Kidney (tissue), 22 donors: ENCODE measurements at regions of chr16 and their contacts with region 1.

Region 1: GRCh38 chr16:87778830-87779579 is 13.2 kb upstream of the KLHDC4 start:
- DNase-seq: peak; percentile 86 to 96 (median 92)
- H3K4me3 ChIP-seq: no peak overlapping the region
- H3K27ac ChIP-seq: no peak overlapping the region
- H3K4me1 ChIP-seq: peaks cover 0 to 3% (median 0%) of the 10 kb centered on the region in 3 donors
- H3K27me3 ChIP-seq: no peaks in the 10 kb centered on the region
- CTCF ChIP-seq: peak; percentile 96

Region 2: DNA sequence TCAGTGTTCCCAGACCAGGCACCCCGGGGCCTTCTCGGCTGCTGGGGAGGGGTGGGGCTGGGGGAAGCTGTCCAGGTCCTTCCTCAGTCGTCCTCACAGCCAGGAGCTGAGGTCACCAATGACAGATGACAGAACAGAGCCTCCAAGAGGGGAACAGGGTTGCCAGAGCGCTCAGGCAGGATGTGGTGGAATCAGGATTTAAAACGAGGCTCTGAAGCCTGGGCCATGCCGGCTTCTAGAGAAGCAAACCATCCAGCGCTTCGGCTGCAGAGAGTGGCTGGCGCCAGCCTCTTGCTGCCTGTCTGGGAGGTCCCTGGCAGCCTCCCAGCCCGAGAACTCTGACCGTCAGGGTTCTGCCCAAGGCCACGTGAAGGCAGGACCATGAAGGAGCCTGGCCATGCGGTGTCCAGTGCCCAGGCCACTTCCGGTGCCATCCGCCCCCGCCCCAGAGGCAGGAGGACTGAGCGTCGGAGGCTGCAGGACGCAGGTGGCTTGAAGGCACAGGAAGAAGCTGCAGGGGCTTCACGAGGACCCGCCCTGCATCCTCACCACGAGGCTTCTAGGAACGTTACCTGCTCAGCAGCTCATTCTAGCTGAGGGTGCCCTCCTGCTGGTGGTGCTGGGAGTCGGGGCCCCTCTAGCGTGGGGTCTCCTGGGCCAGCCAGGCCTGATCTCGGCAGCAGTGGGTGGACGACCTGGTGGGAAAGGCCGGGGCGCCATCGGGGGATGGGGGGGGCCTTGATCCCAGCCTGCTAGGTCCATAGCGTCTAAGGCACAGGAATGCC is 91.7 kb before region 1 on chr16:
- intact Hi-C with region 1: no loop called
- DNase-seq: no peak
- H3K4me3 ChIP-seq: no peak overlapping the region
- H3K27ac ChIP-seq: no peak overlapping the region
- H3K4me1 ChIP-seq: no peaks in the 10 kb centered on the region
- H3K27me3 ChIP-seq: no peaks in the 10 kb centered on the region
- CTCF ChIP-seq: no peak

Region 3: DNA sequence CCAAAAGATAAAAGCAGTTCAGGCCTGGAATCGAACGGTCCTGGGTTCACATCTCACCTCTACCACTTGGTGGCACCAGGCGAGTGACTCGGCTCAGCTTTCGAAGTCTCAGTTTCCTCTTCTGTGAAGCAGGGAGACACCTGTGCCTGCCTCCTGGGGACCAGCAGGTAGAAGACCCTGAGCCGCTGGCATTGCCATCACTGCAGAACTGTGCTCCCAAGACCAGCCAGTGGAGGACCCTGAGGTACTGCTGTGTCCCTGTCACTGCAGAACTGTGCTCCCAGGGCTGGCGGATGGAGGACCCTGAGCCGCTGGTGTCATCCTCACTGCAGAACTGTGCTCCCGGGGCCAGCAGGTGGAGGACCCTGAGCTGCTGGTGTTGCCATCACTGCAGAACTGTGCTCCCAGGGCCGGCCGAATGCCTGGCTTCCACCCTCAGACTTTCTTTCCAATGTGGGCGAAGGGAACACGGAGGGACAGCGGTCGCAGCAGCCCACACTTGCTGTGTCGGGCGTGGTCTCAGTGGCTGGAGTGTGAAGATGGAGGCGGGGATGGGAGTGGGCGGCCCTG is 99.0 kb after region 1 on chr16:
- intact Hi-C with region 1: loop called (anchors 10 kb)
- DNase-seq: no peak
- H3K4me3 ChIP-seq: no peak overlapping the region
- H3K27ac ChIP-seq: no peak overlapping the region
- H3K4me1 ChIP-seq: no peaks in the 10 kb centered on the region
- H3K27me3 ChIP-seq: peaks cover 5% of the 10 kb centered on the region
- CTCF ChIP-seq: peak; percentile 8